IMR-90 (cell line): ENCODE measurements at regions of chr11 and their contacts with region 1.

Region 1: DNA sequence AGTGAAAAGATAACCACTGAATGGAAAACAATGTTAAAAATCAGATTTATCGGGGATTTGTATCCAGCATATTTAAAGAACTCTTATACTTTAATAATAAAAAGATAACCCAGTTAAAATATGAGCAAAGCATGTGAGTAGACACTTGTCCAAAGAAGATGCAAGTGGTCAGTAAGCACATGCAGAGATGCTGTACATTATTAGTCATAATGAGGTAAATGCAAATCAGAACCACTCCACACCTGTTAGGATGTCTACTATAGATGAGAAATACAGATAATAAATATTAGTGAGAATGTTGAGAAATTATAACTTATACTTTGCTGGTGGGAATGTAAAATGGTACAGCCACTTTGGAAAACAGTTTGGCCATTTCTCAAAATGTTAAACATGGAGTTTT is 28.0 kb downstream of the QSER1 start:
- DNase-seq: no peak
- ATAC-seq: no peak
- H3K4me3 ChIP-seq: no peak overlapping the region
- H3K27ac ChIP-seq: no peak overlapping the region
- H3K4me1 ChIP-seq: no peaks in the 10 kb centered on the region
- H3K27me3 ChIP-seq: no peaks in the 10 kb centered on the region
- CTCF ChIP-seq: no peak
- POLR2A ChIP-seq: no peak
- RAD21 ChIP-seq: no peak

Region 2: DNA sequence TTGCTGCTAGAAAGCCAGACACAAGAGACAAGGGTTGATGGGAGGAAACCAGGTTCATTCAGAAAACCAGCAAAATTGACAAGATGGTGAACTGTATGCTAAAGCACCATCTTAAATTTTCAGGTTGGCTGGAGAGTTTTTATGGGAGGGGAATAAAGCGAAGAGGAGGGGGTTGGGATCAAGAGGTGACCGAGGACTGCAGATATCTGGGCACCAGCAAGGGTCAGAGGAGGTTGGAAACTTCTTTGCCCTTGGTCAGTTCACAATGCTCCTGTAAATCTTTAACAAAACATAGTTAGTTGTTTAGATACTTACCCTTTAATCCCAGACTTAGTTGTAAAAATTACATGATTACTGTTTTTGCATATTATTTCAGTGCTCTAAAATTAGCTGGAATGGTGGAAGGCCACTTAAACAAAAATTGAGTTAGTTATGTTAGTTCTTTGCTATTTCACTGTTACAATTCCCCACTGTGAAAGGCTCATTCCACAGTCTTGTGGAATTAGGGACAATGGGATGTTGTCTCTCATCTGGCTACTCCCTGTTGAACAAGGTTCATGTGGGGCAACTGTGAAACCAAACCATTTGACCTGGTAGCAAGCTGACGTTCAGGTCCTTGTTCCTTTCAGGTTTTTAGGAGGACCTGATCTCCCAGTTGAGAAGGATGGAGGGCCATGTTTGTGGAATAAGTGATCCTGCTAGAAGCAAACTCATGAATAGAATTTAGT is 58.6 kb before region 1 on chr11:
- CTCF ChIA-PET with region 1: no interaction called
- POLR2A ChIA-PET with region 1: no interaction called
- dilution Hi-C with region 1: no loop called
- in situ Hi-C with region 1: loop called (anchors 10 kb)
- intact Hi-C with region 1: no loop called
- DNase-seq: no peak
- ATAC-seq: no peak
- H3K4me3 ChIP-seq: no peak overlapping the region
- H3K27ac ChIP-seq: no peak overlapping the region
- H3K4me1 ChIP-seq: no peaks in the 10 kb centered on the region
- H3K27me3 ChIP-seq: peaks cover 5% of the 10 kb centered on the region
- CTCF ChIP-seq: no peak
- POLR2A ChIP-seq: no peak
- RAD21 ChIP-seq: no peak